GM10248 (cell line): ENCODE measurements at regions of chr17 and their contacts with region 1.

Region 1: DNA sequence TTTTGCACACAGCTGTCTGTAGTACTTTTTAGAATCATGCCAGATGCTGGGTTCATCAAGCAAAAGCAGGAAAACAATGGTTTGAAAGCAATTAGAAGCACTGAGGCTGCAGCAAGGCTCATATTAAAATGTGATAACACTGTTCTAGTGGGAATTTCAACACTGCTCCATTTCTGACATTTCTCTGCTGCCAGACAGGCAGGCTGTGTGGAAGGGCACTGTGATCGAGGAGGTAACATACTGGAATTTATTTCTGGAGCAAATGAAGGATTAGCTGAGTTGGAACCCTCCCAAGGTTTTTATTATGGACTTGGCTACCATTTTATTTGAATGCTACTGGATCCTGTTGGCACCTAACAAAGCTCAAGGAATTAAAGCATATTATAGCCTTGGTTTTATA is 66.9 kb downstream of the SKAP1 start:
- DNase-seq: no peak
- CTCF ChIP-seq: no peak

Region 2: DNA sequence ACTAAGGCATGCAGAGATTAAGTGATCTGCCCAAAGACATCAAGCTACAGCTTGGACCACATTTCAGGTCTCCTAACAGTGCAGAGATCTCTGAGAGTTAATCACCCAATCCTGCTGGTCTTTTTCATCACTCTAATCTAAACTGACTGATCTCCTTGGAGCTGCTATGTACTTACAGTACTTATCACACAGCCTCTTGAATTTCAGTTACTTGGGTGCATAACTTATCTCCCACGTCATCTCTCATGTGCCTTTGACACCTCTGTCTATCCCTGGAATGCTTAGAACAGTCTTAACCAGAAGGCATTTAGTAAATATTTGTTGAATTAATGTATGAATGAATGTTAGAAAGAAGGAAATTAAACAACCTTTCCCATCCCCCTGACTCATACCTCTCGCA is 116.5 kb before region 1 on chr17:
- CTCF ChIA-PET with region 1: no interaction called
- POLR2A ChIA-PET with region 1: no interaction called
- DNase-seq: no peak
- CTCF ChIP-seq: no peak

Region 3: GRCh38 chr17:48351831-48352332 is 11.3 kb before region 1 on chr17:
- CTCF ChIA-PET with region 1: interaction called, 31 read pairs
- POLR2A ChIA-PET with region 1: interaction called, 4 read pairs
- DNase-seq: peak; percentile 36
- CTCF ChIP-seq: peak; percentile 62

Region 4: DNA sequence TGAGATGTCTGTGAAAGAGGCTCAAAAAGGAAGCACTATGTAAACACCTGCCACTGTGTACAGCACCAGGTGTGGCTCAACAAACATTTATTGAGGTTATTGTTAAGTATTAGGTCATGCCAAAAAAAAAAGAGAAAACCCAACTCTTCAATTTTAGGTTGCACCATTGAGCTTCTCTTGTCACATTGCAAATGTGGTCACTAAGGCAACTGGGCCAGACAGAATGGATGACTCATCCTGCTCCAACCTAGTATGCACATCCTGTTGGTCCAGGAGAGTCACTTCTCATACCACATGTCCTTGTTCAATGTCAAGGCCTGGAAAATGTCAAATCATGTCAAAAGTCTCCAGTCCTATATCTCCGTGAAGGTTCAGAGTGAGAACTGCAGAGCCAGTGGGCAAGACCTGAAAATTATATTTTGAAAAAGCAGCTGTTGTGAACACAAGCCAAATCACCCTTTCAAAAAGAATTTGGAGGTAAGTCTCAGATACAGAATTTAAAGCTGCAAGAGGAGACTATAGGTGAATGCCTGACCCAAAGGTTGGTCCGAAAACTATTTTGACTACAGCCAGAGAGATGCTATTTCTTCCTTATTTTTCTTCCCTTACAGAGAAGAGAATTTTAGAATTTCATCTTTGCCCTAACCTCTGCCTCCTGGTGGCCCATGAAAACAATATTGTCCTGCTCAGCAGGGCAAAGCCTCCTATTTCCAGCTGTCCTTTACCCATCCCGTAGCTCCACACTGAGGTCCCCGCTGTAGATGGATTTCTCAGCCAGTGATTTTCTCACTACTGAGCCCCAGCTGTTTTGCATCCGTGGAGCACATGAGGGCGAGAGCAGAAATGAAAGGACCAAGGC is 142.9 kb after region 1 on chr17:
- CTCF ChIA-PET with region 1: no interaction called
- POLR2A ChIA-PET with region 1: no interaction called
- DNase-seq: peak; percentile 66
- CTCF ChIP-seq: no peak